ENCODE measurements at regions of chr10 and their contacts with region 1.

Region 1: GRCh38 chr10:125160856-125161706 is 718 bp upstream of the CTBP2 start:
- DNase-seq: peak; percentile 93 to 94
- ATAC-seq: peak; percentile 80 to 91
- H3K4me3 ChIP-seq: peak overlapping the region; percentile 92
- H3K27ac ChIP-seq: peak overlapping the region; percentile 94 to 99
- H3K4me1 ChIP-seq: peaks cover 28% of the 10 kb centered on the region
- CTCF ChIP-seq: peak; percentile 52
- EP300 ChIP-seq: no peak
- POLR2A ChIP-seq: peak; percentile 51
- RAD21 ChIP-seq: peak; percentile 42 to 75

Region 2: DNA sequence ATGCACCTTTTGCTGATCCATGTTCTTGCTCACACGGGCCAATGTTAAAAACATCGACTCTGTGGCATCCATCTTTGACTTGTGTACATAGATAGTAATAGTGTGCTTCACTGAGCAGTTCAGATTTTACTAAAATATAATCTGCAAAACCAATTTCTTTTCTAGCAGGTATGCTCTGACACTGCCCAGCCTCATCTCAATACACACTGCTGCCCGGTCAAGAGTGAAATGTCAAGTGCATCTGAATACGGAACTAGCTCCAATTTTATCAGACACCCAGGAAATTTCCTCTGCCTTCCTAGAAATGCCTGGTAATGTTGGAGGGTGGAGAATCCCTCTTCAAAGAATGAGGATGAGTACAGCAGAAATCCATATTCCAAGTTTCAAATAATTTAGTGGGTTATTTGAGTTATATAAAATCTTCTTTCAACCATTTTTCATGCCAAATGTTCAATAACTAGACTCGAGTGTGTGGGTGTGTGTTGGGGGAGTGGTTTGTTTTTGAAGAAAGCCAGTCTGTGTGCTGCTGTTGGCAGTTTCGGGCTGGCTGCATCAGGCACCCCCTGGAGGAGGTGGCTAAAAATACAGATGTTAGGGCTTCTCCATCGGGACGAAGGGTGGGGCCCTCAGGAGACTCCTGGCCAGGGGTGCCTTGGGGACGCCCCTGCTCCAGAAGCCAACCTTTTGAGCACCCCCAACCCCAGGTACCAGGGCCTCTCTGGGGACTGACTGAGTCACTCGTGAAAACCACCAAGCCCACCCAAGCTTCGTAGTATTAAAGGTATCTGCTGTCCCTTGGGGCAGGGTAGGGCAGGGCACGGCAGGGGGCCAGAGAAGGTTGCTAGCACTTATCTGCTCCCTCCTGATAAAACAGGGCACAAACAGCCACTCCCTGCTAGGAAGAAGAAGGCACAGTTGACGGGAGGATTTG is 16.1 kb before region 1 on chr10:
- CTCF ChIA-PET with region 1: interaction called, 5 read pairs
- POLR2A ChIA-PET with region 1: interaction called, 10 read pairs
- DNase-seq: peak; percentile 67 to 78
- ATAC-seq: peak; percentile 70 to 83
- H3K4me3 ChIP-seq: no peak overlapping the region
- H3K27ac ChIP-seq: peak overlapping the region in 1 of 2 experiments; percentile 39; a peak in 1 of 6 replicates
- H3K4me1 ChIP-seq: peaks cover 52% of the 10 kb centered on the region
- CTCF ChIP-seq: peak; percentile 52
- EP300 ChIP-seq: no peak
- POLR2A ChIP-seq: no peak
- RAD21 ChIP-seq: peak; percentile 50 to 60

Region 3: DNA sequence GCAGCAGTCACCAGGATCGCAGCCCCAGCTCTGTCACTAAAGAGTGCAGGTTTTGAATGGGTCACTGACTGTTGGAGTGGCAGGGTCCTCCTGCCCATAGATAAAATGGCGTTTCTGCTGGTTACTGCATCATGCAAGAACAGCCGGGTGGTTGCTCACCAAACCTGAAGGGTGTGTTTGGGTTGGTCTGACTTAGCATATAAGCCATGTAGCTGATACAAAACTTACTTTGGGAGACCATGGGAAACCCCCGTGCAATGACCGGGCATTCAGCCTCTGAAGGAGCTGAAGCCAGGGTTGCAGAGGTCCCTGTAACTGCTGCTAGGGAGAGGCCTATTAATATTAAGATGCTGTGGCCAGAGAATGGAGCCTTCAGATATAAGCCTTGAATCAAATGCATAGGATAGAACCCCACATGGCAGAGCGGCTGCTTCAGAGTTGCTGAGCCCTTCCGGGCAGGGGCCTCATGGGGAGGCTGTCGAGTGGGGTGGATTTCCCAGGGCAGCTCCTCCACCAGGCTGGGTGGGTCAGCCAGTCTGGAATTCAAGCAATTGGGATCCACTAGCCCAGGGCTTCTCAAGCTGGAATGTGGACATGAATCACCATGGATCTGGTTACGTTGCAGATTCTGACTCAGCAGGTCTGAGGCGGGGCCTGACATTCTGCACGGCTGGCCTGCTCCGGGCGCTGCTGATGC is 70.2 kb after region 1 on chr10:
- CTCF ChIA-PET with region 1: no interaction called
- POLR2A ChIA-PET with region 1: interaction called, 10 read pairs
- DNase-seq: peak; percentile 96 to 99
- ATAC-seq: peak; percentile 97 to 98
- H3K4me3 ChIP-seq: peak overlapping the region; percentile 10
- H3K27ac ChIP-seq: peak overlapping the region; percentile 76 to 92
- H3K4me1 ChIP-seq: peaks cover 27% of the 10 kb centered on the region
- CTCF ChIP-seq: no peak
- EP300 ChIP-seq: peak in 1 of 2 experiments; percentile 54; a peak in 1 of 5 replicates
- POLR2A ChIP-seq: no peak
- RAD21 ChIP-seq: peak; percentile 10 to 40; a peak in 2 of 5 replicates